Body of pancreas (tissue), 4 donors: ENCODE measurements at regions of chr12 and their contacts with region 1.

Region 1: GRCh38 chr12:117874842-117875434 is 93.9 kb downstream of the KSR2 start:
- DNase-seq: peak; percentile 77 to 82 (median 79)
- ATAC-seq: peak; percentile 81
- H3K4me3 ChIP-seq: no peak overlapping the region
- H3K27ac ChIP-seq: no peak overlapping the region
- H3K4me1 ChIP-seq: peaks cover 5% of the 10 kb centered on the region
- H3K27me3 ChIP-seq: no peaks in the 10 kb centered on the region
- CTCF ChIP-seq: peak; percentile 84 to 92 (median 87)
- POLR2A ChIP-seq: no peak

Region 2: DNA sequence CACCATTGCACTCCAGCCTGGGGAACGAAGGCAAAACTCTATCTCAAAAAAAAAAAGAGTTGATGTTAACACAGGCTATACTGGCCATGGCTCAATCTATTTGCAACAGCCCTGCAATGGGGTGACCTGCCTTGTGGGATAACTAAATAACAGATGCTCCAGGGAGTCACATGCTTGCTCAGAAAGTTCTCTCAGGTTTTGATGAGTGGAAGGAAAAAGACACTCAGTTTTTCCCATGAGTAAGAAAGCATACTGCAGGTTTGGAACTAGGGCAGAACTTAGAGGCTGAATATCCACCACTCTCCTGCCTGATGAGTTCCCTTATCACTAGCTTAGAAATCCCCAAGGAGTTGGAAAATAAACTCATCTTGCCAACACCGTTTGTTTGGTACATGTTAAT is 169.1 kb after region 1 on chr12:
- intact Hi-C with region 1: loop called (anchors 10 kb)
- DNase-seq: no peak
- ATAC-seq: no peak
- H3K4me3 ChIP-seq: no peak overlapping the region
- H3K27ac ChIP-seq: no peak overlapping the region
- H3K4me1 ChIP-seq: no peaks in the 10 kb centered on the region
- H3K27me3 ChIP-seq: no peaks in the 10 kb centered on the region
- CTCF ChIP-seq: no peak
- POLR2A ChIP-seq: no peak